Activated T-helper 1 cell treated with anti-CD3 and anti-CD28 coated beads, Interleukin-12 subunit alpha, Interleukin-12 subunit beta, Interleukin-2, Interleukin-4 antibody, amounts not matched to agents 30 ng/mL and 10 ng/mL and 1 ng/mL, durations not matched to agents 14 hours and 24 hours and 36 hours (primary cell): ENCODE measurements at regions of chr15 and their contacts with region 1.

Region 1: GRCh38 chr15:44385344-44385942 is 42.0 kb upstream of the CTDSPL2 start:
- DNase-seq: no peak
- H3K4me3 Mint-ChIP-seq: no peak overlapping the region
- H3K27ac Mint-ChIP-seq: peak overlapping the region; percentile 35
- H3K4me1 Mint-ChIP-seq: peaks cover 8% of the 10 kb centered on the region
- H3K27me3 Mint-ChIP-seq: no peaks in the 10 kb centered on the region

Region 2: GRCh38 chr15:44144184-44144583 is 241.3 kb before region 1 on chr15:
- intact Hi-C with region 1: loop called (anchors 5 kb)
- DNase-seq: no peak
- H3K4me3 Mint-ChIP-seq: no peak overlapping the region
- H3K27ac Mint-ChIP-seq: no peak overlapping the region
- H3K4me1 Mint-ChIP-seq: no peaks in the 10 kb centered on the region
- H3K27me3 Mint-ChIP-seq: peaks cover 5% of the 10 kb centered on the region